ENCODE measurements at regions of chr10 and their contacts with region 1.

Region 1: GRCh38 chr10:122565728-122566206 is 5.2 kb downstream of the DMBT1 start:
- DNase-seq: peak; percentile 83 to 87
- ATAC-seq: peak; percentile 71 to 91 (median 78)
- H3K4me3 ChIP-seq: peak overlapping the region; percentile 44
- H3K27ac ChIP-seq: no peak overlapping the region
- H3K4me1 ChIP-seq: no peaks in the 10 kb centered on the region
- H3K27me3 ChIP-seq: peaks cover 0 to 9% (median 1%) of the 10 kb centered on the region in 3 donors
- CTCF ChIP-seq: peak; percentile 88

Region 2: GRCh38 chr10:122279725-122280141 is 286.0 kb before region 1 on chr10:
- intact Hi-C with region 1: loop called in 1 of 2 experiments (anchors 1 kb)
- DNase-seq: peak in 1 of 2 donors; percentile 70
- ATAC-seq: peak; percentile 69 to 87 (median 80)
- H3K4me3 ChIP-seq: no peak overlapping the region
- H3K27ac ChIP-seq: peak overlapping the region; percentile 62
- H3K4me1 ChIP-seq: peaks cover 20% of the 10 kb centered on the region
- H3K27me3 ChIP-seq: no peaks in the 10 kb centered on the region
- CTCF ChIP-seq: peak; percentile 77

Region 3: DNA sequence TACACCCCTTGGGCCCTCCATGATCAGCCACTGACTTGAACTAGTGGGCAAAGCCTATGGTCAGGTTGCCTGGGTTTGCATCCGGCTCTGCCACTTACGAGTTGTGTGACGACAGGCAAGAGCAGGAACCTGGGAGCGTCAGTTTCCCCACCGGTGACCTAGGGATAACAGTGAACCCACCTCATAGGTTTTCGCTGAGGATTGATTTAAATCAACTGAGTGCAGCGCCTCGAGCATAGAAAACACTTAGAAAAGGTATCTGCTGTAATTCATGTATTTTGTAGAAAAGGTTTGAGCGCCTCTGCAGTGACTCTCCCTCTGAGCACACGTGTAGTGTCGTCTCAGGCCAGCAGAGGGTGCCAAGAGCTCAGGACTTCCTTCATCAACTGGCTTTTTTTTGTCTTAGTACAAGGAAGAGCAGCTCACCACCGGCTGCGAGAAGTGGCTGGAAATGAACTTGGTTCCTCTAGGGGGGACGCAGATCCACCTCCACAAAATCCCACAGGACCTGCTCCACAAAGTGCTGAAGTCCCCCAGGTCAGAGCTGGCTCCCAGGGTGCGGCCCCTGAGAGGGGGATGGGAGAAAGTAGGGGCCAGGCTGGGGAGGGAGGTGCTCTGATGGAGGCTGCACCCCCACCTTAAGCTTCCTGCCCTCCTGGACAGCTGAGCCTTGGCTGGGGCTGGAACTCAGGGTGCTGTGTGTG is 267.0 kb before region 1 on chr10:
- intact Hi-C with region 1: loop called (anchors 1 to 5 kb)
- DNase-seq: peak; percentile 71 to 80
- ATAC-seq: peak; percentile 80 to 95 (median 86)
- H3K4me3 ChIP-seq: no peak overlapping the region
- H3K27ac ChIP-seq: no peak overlapping the region
- H3K4me1 ChIP-seq: peaks cover 3% of the 10 kb centered on the region
- H3K27me3 ChIP-seq: peaks cover 0 to 1% (median 0%) of the 10 kb centered on the region in 3 donors
- CTCF ChIP-seq: peak; percentile 91

Region 4: DNA sequence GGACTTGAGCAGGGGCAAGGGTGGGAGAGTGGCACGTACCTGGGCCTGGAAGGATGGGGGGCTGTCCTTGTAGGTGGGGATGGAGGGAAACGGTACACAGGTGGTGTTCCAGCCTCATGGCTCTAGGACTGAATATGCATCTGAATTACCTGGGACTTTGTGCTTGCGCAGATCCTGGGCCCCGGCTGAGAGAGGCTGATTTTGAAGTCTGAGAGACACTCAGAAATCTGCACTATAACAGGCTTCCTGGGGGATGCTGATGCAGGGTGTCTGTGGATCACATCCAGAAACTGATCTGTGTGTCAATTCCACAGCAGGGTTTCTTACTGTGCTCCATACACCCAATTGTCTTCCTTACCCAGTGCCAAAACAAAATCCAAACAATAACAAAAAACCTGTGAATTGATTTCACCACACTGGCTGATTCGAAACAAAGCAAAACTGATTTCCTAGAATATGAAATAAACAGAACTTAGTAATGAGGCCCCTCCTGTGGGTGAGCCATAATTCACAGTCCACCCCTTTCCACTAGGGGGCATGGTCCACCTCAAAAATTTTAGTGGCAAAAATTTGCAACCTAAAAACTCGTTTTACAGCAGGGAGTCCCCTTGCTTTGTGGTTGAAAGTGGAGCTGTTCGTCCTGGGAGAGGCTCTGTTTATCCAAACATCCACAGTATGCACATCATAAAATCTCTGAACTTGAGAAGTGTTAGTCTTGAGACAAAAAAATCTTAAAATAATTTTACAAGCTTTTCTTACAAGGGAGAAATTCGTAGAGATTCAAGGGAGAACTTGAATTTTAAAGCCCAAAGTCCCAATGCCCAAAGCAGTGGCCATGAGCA is 223.3 kb before region 1 on chr10:
- intact Hi-C with region 1: loop called (anchors 2 to 10 kb)
- DNase-seq: no peak
- ATAC-seq: peak; percentile 42 to 72 (median 52)
- H3K4me3 ChIP-seq: no peak overlapping the region
- H3K27ac ChIP-seq: no peak overlapping the region
- H3K4me1 ChIP-seq: peaks cover 8% of the 10 kb centered on the region
- H3K27me3 ChIP-seq: no peaks in the 10 kb centered on the region
- CTCF ChIP-seq: peak; percentile 73

Region 5: DNA sequence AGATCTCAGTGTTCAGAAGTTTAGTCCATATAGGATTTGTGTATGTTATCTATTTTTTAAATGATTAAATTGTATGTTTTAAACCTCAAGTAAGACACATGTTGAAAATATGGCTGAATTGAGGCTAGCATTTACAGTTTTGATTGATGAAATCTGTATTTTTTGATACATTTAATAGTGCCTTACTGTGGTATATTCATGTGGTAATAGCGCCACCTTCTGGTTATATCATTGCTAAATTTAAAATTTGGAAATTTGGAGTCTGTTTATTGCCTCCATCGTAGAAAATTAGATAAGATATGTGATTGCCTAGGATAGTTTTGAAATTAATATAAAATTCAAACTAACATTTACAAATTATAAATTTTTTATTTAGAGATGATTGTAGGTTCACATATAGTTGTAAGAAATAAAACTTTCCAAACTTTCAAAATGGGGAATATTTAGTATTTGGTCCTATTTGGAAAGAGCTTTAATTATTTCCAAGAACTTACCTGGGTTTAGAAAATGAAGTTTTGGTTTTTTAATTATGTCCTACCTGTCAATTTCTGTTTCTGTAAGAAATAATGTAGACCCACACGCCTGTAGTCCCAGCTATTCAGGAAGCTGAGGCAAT is 130.4 kb before region 1 on chr10:
- intact Hi-C with region 1: loop called in 1 of 2 experiments (anchors 10 kb)
- DNase-seq: no peak
- ATAC-seq: peak in 2 of 4 donors; percentile 53 to 75
- H3K4me3 ChIP-seq: no peak overlapping the region
- H3K27ac ChIP-seq: no peak overlapping the region
- H3K4me1 ChIP-seq: no peaks in the 10 kb centered on the region
- H3K27me3 ChIP-seq: no peaks in the 10 kb centered on the region
- CTCF ChIP-seq: peak; percentile 76

Region 6: GRCh38 chr10:122461367-122461728 is 104.4 kb before region 1 on chr10 and contains the start of gene HTRA1:
- intact Hi-C with region 1: loop called (anchors 5 to 10 kb)
- DNase-seq: peak; percentile 84 to 88
- ATAC-seq: peak; percentile 48 to 62 (median 56)
- H3K4me3 ChIP-seq: peak within 1 kb of the TSS; percentile 76
- H3K27ac ChIP-seq: peak within 1 kb of the TSS; percentile 63
- H3K4me1 ChIP-seq: peaks cover 26% of the 10 kb centered on the region
- H3K27me3 ChIP-seq: no peaks in the 10 kb centered on the region
- CTCF ChIP-seq: no peak
- total RNA-seq, gene HTRA1: 11.6 to 30.8 (median 13.2) TPM

Region 7: GRCh38 chr10:122468926-122469781 is 96.6 kb before region 1 on chr10:
- intact Hi-C with region 1: loop called (anchors 5 to 10 kb)
- DNase-seq: peak in 1 of 2 donors; percentile 43
- ATAC-seq: peak; percentile 88 to 93 (median 90)
- H3K4me3 ChIP-seq: no peak overlapping the region
- H3K27ac ChIP-seq: peak overlapping the region; percentile 76
- H3K4me1 ChIP-seq: peaks cover 17% of the 10 kb centered on the region
- H3K27me3 ChIP-seq: no peaks in the 10 kb centered on the region
- CTCF ChIP-seq: no peak

Region 8: DNA sequence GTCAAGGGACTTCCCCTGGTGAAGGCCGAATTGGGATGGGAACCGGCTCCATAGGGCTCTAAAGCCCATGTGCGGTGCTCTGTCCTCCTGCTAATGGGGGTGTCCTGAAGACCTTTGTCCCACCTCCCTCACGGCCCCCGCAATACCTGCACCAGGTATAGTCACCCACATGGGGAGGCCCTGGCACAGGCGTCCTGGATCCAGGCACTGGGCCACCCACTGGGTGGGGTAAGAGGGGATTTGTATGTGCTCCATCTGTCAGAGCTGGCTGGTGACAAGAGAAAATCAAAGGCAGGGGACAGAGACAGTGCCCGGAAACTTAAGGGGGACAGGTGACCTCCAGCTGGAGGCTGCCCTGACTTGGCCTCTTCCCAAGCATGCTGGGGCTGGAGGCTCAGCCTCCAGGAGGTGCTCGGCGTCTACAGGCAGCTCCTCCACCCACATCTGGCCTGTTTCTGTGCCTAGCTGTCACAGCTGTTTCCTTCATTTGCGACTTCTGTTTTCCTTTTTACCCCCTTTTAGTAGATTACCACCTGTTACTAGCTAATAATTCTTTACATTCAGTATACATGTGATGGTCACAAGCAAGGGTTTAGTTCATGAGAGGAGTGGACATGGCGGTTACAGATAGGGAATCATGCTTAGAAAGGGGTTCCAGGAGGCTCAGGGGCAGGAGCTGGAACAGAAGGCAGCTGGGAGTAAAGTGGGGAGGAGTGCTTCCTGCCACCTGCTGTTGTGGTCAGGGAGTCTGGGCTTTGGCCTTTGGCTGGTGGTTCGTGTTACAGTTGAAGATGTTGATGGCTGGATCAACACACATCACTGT is 282.2 kb after region 1 on chr10:
- intact Hi-C with region 1: no loop called
- DNase-seq: no peak
- ATAC-seq: peak in 2 of 4 donors; percentile 52 to 86
- H3K4me3 ChIP-seq: no peak overlapping the region
- H3K27ac ChIP-seq: peak overlapping the region; percentile 30
- H3K4me1 ChIP-seq: no peaks in the 10 kb centered on the region
- H3K27me3 ChIP-seq: no peaks in the 10 kb centered on the region
- CTCF ChIP-seq: no peak